Dendritic cell treated with granulocyte-macrophage colony-stimulating factor and Interleukin-4, amounts not matched to agents 40 ng/mL and 50 ng/mL, for 4 days (primary cell): ENCODE measurements at regions of chr7 and their contacts with region 1.

Region 1: DNA sequence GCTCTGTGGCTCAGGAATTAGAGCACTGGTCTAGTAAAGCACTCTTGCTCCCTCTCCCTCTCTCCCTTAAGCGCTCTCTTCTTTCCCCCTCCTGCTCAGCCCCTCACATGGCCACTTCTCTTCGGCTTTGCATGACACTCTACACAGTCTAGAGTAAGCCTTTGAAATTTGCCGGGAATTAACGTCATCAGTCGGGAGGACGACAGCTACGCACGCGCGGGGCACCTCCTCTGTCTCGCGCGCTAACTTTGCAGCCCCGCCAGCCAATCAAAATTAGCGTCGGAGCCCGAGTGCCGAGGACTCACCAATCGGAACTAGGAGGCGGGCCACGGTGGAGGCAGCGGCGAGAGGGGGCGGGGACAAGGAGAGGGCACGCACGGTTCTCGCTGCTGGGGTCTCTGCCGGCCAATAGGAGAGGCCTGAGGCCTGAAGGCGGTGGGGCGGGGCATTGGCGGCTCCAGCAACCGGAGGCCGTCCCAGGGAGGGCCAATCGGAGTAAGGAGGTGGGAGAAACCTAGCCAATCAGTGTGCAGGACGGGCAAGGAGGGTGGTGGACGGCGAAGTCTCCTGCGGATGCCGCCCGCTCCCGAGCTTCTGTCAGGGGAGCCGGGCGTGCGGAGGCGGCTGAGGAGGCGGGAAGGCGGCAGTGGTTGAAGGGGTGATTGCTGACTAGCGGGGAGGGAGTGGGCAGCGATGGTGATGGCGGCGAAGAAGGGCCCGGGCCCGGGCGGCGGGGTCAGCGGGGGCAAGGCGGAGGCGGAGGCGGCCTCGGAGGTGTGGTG is at the start of gene AGFG2:
- H3K4me3 Mint-ChIP-seq: peak within 1 kb of the TSS; percentile 95
- H3K27ac Mint-ChIP-seq: peak within 1 kb of the TSS; percentile 82
- H3K4me1 Mint-ChIP-seq: peaks cover 50% of the 10 kb centered on the region
- H3K27me3 Mint-ChIP-seq: no peaks in the 10 kb centered on the region

Region 2: DNA sequence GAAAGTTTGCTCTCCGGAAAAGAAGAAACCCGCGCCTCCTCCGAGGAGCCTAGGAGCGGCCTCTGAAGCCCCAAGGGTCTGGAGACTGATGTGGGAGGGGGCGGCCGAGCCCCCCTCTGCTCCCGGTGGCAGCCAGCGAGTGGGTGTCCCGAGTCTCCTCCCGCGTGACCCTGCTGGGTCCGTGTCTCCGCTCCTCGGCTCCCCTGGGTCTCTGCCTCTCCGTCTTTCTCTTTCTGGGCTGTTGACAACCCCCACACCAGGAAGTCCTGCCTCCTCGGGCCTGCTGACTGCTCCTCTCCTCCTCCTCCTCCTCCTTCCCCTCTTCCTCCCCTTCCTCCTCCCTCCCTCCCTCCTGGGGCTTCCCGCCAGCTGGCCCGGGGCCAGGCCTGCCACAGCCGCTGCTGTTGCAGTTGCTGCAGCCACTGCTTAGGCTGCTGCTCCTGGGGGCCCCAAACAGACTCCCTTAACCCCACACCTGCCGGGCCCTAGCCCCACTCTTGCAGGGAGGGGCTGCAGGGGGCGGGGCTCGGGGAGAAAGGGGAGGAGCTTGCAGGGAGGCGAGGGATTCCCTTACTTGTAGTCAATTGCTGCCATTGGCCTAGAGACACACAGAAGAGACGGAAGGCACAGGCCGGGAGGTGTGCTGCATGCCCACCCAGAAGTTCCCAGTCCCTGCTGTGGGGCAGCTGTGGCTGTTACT is 59.7 kb before region 1 on chr7 and contains the start of gene TSC22D4:
- intact Hi-C with region 1: loop called (anchors 5 kb)
- H3K4me3 Mint-ChIP-seq: peak within 1 kb of the TSS; percentile 99
- H3K27ac Mint-ChIP-seq: peak within 1 kb of the TSS; percentile 77
- H3K4me1 Mint-ChIP-seq: peaks cover 47% of the 10 kb centered on the region
- H3K27me3 Mint-ChIP-seq: peaks cover 9% of the 10 kb centered on the region

Region 3: GRCh38 chr7:100520138-100520537 is 18.7 kb before region 1 on chr7:
- intact Hi-C with region 1: loop called (anchors 1 kb)
- H3K4me3 Mint-ChIP-seq: no peak overlapping the region
- H3K27ac Mint-ChIP-seq: no peak overlapping the region
- H3K4me1 Mint-ChIP-seq: peaks cover 35% of the 10 kb centered on the region
- H3K27me3 Mint-ChIP-seq: no peaks in the 10 kb centered on the region

Region 4: DNA sequence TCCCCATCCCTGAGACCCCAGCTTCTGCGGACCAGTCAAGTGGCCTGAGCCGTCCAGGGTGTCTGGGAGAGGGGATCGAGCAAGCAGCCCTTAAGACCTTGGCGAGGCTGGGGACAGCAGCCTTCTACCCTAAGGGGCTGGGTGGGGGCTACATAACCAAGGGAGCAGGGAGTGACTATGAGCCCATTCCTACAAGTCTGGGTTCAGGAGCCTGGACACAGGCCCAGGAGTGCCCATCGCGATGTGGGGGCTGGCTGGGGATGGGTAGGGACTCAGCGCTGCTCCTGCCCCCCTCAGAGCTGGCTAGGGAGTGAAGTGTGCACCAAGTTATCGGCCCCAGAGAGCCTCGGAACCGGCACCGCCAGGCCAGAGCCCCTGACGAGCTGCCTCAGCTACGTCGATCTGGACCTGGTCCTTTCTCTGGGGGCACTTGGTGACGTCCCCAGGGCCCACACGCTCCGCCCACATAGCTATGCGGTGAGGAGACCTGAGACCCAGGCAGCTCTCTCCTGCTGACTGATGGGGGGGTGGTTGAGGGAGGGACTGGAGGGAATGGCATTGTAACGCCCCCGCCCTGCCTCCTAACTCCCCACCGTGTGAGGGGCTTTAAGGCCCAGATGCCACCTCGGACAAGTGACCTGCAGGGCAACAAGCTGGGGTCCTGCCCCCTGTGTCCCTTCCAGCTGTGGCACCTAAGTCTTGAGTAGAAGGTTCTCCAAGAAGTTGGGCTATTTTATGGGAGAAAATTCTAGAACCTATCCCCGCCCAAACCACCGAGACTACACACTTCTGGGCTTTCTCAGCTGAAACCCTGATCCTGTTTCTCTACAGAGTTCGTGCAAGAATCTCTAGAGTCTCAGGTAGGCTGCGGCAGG is 32.3 kb after region 1 on chr7:
- intact Hi-C with region 1: no loop called
- H3K4me3 Mint-ChIP-seq: no peak overlapping the region
- H3K27ac Mint-ChIP-seq: no peak overlapping the region
- H3K4me1 Mint-ChIP-seq: peaks cover 61% of the 10 kb centered on the region
- H3K27me3 Mint-ChIP-seq: peaks cover 61% of the 10 kb centered on the region

Region 5: DNA sequence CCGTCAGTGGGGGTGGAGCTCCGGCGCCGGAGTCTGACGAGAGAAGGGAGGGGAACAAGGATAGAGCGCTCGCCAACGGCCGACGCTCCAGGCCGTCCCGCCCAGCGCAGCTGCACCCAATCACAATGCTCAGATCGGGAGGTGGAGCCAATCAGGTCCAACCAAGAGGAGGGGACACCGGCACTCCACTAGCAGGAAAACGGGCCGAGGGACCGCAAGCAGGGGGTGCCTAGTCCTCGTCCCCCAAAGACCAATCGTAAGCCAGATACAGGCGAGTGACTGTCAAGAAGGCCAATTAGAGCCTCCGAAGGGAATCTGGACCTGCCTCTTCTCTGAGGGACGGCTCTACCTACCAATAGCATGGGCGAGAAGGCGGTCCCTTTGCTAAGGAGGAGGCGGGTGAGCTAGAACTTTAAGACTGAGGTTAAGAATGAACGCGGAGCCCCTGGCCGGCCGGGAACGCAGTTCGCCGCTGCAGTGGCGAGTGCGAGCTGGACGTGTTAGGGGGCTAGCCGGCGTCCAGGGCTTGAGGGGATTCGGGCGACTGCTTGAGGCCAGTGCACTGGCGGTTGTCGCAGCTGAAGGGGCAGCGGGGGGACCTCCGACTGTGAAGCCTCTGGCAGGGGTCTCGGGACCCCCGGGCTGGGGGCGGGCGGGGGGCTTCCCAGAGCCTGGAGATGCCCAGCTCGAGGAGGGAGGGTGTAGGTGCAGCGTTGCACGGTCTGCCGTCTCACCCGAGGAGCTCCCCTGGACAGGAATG is 47.6 kb after region 1 on chr7 and contains the start of gene FBXO24:
- intact Hi-C with region 1: no loop called
- H3K4me3 Mint-ChIP-seq: peak within 1 kb of the TSS; percentile 95
- H3K27ac Mint-ChIP-seq: peak within 1 kb of the TSS; percentile 90
- H3K4me1 Mint-ChIP-seq: peaks cover 59% of the 10 kb centered on the region
- H3K27me3 Mint-ChIP-seq: peaks cover 18% of the 10 kb centered on the region

Region 6: GRCh38 chr7:101567230-101567629 is 1028.4 kb after region 1 on chr7:
- intact Hi-C with region 1: no loop called
- H3K4me3 Mint-ChIP-seq: no peak overlapping the region
- H3K27ac Mint-ChIP-seq: no peak overlapping the region
- H3K4me1 Mint-ChIP-seq: peaks cover 5% of the 10 kb centered on the region
- H3K27me3 Mint-ChIP-seq: peaks cover 8% of the 10 kb centered on the region